SK-N-SH (cell line): ENCODE measurements at regions of chr4 and their contacts with region 1.

Region 1: GRCh38 chr4:184745831-184746795 is 12.2 kb upstream of the CENPU start:
- DNase-seq: peak; percentile 84
- H3K4me3 ChIP-seq: no peak overlapping the region; a peak in 1 of 4 replicates
- H3K27ac ChIP-seq: peak overlapping the region; percentile 32 to 82; a peak in 3 of 4 replicates
- H3K4me1 ChIP-seq: peaks cover 4 to 14% of the 10 kb centered on the region in 2 experiments; a peak in 1 of 4 replicates
- H3K27me3 ChIP-seq: no peaks in the 10 kb centered on the region
- CTCF ChIP-seq: peak; percentile 86
- EP300 ChIP-seq: no peak
- RAD21 ChIP-seq: peak; percentile 96

Region 2: DNA sequence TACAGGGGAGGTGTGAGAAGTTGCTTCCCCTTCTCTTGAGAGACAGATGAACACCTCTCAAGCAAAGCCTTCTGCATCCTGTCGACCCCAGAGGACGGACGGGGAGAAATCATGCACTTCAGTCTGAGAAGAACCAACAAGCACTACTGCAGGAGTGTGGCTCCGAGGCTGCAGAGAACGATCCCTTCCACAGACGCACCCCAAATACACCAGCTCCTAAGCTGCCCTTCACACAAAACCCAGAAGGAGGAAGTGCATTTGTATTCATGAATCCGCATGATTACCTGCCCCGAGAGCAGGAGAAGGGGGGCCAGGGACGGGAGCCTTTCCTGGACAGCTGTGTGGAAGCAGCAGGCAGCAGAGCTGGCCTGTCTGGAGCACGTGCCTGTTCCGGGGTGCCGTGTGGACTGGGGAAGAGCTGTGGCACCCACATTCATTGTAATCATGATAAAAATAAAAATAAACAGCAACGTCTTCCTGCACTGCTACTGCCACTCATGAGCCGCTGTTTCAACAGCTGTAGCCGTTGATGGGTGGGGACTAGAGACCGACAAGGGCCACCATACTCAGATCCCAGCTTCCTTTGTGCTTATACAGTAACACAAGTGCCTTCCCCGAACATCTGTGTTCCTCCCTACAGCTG is 36.7 kb after region 1 on chr4:
- CTCF ChIA-PET with region 1: interaction called, 17 read pairs
- POLR2A ChIA-PET with region 1: interaction called, 3 read pairs
- DNase-seq: no peak
- H3K4me3 ChIP-seq: no peak overlapping the region
- H3K27ac ChIP-seq: peak overlapping the region in 1 of 2 experiments; percentile 99; a peak in 1 of 4 replicates
- H3K4me1 ChIP-seq: peaks cover 0 to 37% of the 10 kb centered on the region in 2 experiments; a peak in 2 of 4 replicates
- H3K27me3 ChIP-seq: no peaks in the 10 kb centered on the region
- CTCF ChIP-seq: no peak
- EP300 ChIP-seq: no peak
- RAD21 ChIP-seq: no peak

Region 3: DNA sequence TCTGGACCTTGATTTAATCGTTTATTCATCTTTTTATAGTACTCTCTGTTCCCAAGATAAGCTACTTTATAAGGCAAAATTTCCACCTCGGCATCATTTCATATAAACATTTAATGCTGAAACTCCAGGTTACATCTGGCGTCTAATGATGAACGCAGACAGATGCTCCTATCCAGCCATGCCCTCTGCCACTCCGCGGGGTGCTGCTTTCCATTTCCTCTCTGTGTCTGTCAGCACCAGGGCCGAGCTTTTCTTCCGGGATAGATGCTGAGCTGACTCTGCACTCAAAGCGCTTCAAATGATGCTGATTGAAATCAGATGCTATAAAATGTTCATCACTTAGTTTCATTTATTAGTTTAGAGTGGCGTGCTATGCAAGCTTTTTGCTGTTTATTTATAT is 191.6 kb after region 1 on chr4:
- CTCF ChIA-PET with region 1: interaction called, 10 read pairs
- POLR2A ChIA-PET with region 1: no interaction called
- DNase-seq: peak; percentile 85
- H3K4me3 ChIP-seq: no peak overlapping the region
- H3K27ac ChIP-seq: peak overlapping the region in 1 of 2 experiments; percentile 91; a peak in 2 of 4 replicates
- H3K4me1 ChIP-seq: peaks cover 0 to 2% of the 10 kb centered on the region in 2 experiments; a peak in 2 of 4 replicates
- H3K27me3 ChIP-seq: no peaks in the 10 kb centered on the region
- CTCF ChIP-seq: no peak
- EP300 ChIP-seq: no peak; a peak in 1 of 4 replicates
- RAD21 ChIP-seq: no peak; the same call in 1 of the 2 replicates

Region 4: DNA sequence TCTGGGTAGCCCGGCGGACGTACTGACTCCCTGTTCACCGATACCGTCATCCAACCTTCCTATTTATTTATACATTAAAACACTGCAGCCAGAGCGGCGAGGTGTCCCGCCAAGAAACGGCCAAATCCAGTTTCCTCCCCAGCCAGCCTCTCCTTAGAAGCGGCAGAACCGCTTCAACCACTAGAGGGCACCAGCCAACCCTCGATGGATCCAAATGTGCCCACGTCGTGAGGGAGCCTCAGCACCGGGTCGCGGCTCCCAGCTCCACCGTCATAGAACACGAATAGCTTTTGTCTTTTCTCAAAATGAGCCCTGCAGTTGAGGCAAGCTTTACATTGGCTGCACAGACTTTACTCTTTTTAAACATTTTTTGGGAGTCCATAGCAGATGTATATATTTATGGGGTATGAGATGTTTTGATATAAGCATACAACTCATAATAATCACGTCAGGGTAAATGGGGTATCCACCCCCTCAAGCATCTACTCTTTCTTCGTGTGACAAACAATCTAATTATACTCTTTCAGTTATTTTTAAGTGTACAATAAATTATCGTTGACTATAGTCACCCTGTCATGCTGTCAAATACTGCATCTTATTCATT is 259.2 kb after region 1 on chr4:
- CTCF ChIA-PET with region 1: interaction called, 18 read pairs
- POLR2A ChIA-PET with region 1: no interaction called
- DNase-seq: peak; percentile 89
- H3K4me3 ChIP-seq: peak overlapping the region; percentile 4 to 35; a peak in 2 of 4 replicates
- H3K27ac ChIP-seq: no peak overlapping the region
- H3K4me1 ChIP-seq: peaks cover 0 to 5% of the 10 kb centered on the region in 2 experiments; a peak in 1 of 4 replicates
- H3K27me3 ChIP-seq: peaks cover 10% of the 10 kb centered on the region; the same call in 1 of the 2 replicates
- CTCF ChIP-seq: peak; percentile 92
- EP300 ChIP-seq: no peak
- RAD21 ChIP-seq: peak; percentile 82